AG04450 (cell line): ENCODE measurements at regions of chr2 and their contacts with region 1.

Region 1: DNA sequence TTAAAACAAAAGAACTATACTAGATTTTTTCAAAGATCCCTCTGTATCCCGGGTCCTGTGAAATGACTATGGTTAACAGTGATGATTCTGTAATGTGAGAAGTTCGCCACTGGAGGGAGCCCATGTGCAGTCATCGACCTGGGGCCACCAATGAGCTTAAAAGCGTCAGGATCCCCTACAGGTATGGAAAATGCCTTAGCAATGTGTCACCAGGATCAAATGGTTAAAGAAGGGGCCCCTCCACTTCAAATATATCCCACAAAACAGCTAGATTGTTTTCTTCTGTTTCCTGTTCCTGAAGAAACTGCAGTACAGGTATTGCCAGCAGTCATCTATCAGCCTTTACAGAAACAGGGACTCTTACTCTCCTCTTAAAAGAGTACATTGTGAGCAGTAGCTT is 15.3 kb downstream of the CHRNA1 start:
- DNase-seq: peak; percentile 16
- H3K4me3 ChIP-seq: no peak overlapping the region
- H3K27ac ChIP-seq: no peak overlapping the region
- H3K27me3 ChIP-seq: peaks cover 2% of the 10 kb centered on the region
- CTCF ChIP-seq: peak; percentile 83

Region 2: GRCh38 chr2:174764280-174765255 is 15.6 kb after region 1 on chr2 and contains the start of gene CHRNA1:
- CTCF ChIA-PET with region 1: interaction called, 74 read pairs
- POLR2A ChIA-PET with region 1: no interaction called
- DNase-seq: no peak
- H3K4me3 ChIP-seq: no peak within 1 kb of the TSS
- H3K27ac ChIP-seq: peak within 1 kb of the TSS; percentile 82
- H3K27me3 ChIP-seq: no peaks in the 10 kb centered on the region
- CTCF ChIP-seq: no peak
- polyA plus RNA-seq, gene CHRNA1: 2.6 and 2.7 TPM in 2 replicates

Region 3: GRCh38 chr2:174997110-174997509 is 248.2 kb after region 1 on chr2:
- CTCF ChIA-PET with region 1: interaction called, 238 read pairs
- POLR2A ChIA-PET with region 1: no interaction called
- DNase-seq: no peak
- H3K4me3 ChIP-seq: no peak overlapping the region
- H3K27ac ChIP-seq: no peak overlapping the region
- H3K27me3 ChIP-seq: no peaks in the 10 kb centered on the region
- CTCF ChIP-seq: no peak

Region 4: GRCh38 chr2:175015340-175015739 is 266.4 kb after region 1 on chr2:
- CTCF ChIA-PET with region 1: interaction called, 11 read pairs
- POLR2A ChIA-PET with region 1: no interaction called
- DNase-seq: no peak
- H3K4me3 ChIP-seq: no peak overlapping the region
- H3K27ac ChIP-seq: no peak overlapping the region
- H3K27me3 ChIP-seq: no peaks in the 10 kb centered on the region
- CTCF ChIP-seq: no peak